ENCODE measurements at regions of chr15 and their contacts with region 1.

Region 1: DNA sequence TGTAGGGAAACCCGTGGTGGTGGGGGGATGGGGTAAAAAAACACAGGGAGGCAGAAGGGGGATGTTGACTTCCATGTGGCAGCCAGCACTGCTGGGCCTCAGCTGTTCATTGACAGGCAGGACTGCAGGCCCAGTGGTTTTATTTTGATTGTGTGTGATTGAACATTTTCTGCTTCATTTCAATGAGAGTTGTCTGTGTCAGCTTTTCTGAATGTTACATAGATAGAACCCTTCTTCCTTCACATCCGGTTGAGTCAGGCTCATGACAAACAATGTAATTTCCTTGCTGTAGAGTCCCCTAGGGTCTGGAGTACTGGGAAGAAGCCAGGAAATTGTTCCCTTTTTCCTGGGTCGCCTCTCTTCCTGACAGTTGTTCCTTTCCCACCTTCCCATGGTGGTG is 8.2 kb upstream of the RPP25 start:
- DNase-seq: no peak
- ATAC-seq: no peak
- H3K4me3 ChIP-seq: no peak overlapping the region
- H3K4me3 Mint-ChIP-seq: no peak overlapping the region
- H3K27ac ChIP-seq: no peak overlapping the region
- H3K27ac Mint-ChIP-seq: no peak overlapping the region
- H3K4me1 ChIP-seq: no peaks in the 10 kb centered on the region
- H3K4me1 Mint-ChIP-seq: no peaks in the 10 kb centered on the region
- H3K27me3 ChIP-seq: peaks cover 0 to 16% (median 8%) of the 10 kb centered on the region in 4 experiments
- H3K27me3 Mint-ChIP-seq: peaks cover 34% of the 10 kb centered on the region
- CTCF ChIP-seq: no peak

Region 2: GRCh38 chr15:74950078-74951000 is 14.5 kb before region 1 on chr15:
- CTCF ChIA-PET with region 1: interaction called, 20 read pairs
- POLR2A ChIA-PET with region 1: no interaction called
- intact Hi-C with region 1: no loop called
- DNase-seq: peak; percentile 86
- ATAC-seq: peak; percentile 95
- H3K4me3 ChIP-seq: no peak overlapping the region
- H3K4me3 Mint-ChIP-seq: no peak overlapping the region
- H3K27ac ChIP-seq: no peak overlapping the region
- H3K27ac Mint-ChIP-seq: no peak overlapping the region
- H3K4me1 ChIP-seq: peaks cover 6 to 8% of the 10 kb centered on the region in 2 donors
- H3K4me1 Mint-ChIP-seq: peaks cover 7% of the 10 kb centered on the region
- H3K27me3 ChIP-seq: peaks cover 0 to 22% (median 2%) of the 10 kb centered on the region in 4 experiments
- H3K27me3 Mint-ChIP-seq: peaks cover 7% of the 10 kb centered on the region
- CTCF ChIP-seq: peak; percentile 97